Activated B cell treated with CpG ODN at 0.5 μM for 24 hours (primary cell): ENCODE measurements at regions of chr6 and their contacts with region 1.

Region 1: DNA sequence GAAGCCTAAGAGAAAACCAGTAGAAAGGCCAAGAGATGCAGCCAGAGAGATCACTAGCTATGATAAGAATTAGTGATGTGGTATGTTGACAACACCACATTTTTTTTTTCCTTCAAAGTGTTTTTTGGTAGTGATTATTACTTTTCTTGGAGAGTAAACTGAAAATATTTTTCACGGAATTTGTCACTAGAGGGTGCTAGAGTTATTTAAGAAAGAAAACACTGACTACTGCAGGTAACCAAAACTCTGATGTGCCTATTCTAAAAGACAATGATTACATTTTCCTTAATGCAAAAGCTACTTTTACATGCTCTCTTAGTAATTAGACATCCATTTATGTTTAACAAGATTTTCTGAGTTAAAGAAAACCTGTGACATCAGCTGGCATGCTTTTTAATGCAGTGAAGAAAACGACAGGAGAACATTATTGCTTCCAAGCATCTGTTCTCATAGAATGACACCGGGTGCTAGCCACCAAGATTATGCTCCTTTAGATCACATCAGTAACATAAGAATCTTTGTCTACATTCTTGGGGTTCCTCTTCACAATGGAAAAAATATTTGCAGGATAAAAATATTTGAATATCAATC is 28.8 kb downstream of the RWDD2A start:
- DNase-seq: no peak
- ATAC-seq: no peak
- H3K4me3 Mint-ChIP-seq: no peak overlapping the region
- H3K27ac Mint-ChIP-seq: no peak overlapping the region
- H3K4me1 Mint-ChIP-seq: no peaks in the 10 kb centered on the region
- H3K27me3 Mint-ChIP-seq: peaks cover 2% of the 10 kb centered on the region
- CTCF ChIP-seq: no peak

Region 2: GRCh38 chr6:83042467-83043053 is 179.4 kb before region 1 on chr6:
- CTCF ChIA-PET with region 1: no interaction called
- POLR2A ChIA-PET with region 1: no interaction called
- intact Hi-C with region 1: no loop called
- DNase-seq: no peak
- ATAC-seq: no peak
- H3K4me3 Mint-ChIP-seq: no peak overlapping the region
- H3K27ac Mint-ChIP-seq: no peak overlapping the region
- H3K4me1 Mint-ChIP-seq: no peaks in the 10 kb centered on the region
- H3K27me3 Mint-ChIP-seq: no peaks in the 10 kb centered on the region
- CTCF ChIP-seq: no peak

Region 3: DNA sequence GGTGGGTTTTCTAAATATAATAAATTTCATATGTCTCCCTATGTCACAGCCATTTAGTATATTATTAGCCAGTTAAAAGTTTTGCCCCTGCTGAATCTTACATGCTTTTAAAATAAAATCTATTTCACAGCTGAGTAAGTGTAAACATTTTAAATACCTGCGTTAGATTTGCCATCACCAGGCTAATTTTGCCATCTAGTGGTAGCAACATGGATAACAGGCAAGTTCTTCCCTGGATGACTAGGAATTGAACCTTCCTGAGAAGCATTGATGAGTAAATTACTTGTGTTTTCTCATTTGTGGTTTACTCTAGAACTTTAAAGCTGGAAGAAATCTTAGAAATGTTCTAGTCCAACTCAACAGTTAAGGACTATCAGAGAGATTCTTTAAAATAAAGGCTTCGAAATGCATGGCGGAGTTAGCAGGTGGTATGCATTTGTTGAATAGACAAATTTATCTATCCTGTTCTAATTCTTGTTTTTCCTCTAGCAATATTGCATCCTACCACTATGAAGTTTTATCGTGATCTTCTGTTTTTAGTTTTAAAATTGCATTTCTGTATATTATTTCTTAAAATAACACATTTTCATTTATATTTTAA is 293.0 kb after region 1 on chr6:
- CTCF ChIA-PET with region 1: interaction called, 26 read pairs
- POLR2A ChIA-PET with region 1: no interaction called
- intact Hi-C with region 1: loop called (anchors 1 kb)
- DNase-seq: no peak
- ATAC-seq: no peak
- H3K4me3 Mint-ChIP-seq: no peak overlapping the region
- H3K27ac Mint-ChIP-seq: no peak overlapping the region
- H3K4me1 Mint-ChIP-seq: peaks cover 9% of the 10 kb centered on the region
- H3K27me3 Mint-ChIP-seq: peaks cover 21% of the 10 kb centered on the region
- CTCF ChIP-seq: peak; percentile 68

Region 4: DNA sequence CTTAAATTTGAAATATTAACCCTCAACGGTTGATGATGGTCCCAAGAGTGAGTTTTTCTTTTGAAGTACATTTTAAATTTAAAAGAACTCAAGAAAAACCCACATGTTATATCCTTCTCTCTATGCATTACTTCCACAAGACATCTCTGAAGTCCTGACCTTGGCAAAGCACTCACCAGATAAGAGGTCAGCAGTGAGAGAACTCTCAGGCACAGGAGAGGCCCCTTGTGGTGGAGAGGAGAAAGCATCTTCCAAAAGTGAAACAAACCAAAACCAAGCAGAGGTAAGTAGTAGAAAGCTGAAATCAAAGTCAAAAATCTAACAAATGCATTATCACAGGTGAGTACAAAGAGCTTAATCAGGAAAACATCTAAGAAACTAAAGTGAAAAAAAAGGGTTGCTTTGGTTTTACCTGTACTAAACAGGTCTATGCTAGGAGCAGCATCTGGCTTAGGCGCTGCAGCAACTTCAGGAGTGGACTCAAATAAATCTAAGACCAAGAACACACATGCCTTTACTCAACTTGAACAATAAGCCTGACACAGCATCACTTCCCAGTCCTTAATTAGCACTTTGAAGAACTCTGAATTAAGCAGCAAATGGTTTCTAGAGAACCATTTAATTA is 370.9 kb after region 1 on chr6:
- CTCF ChIA-PET with region 1: no interaction called
- POLR2A ChIA-PET with region 1: no interaction called
- intact Hi-C with region 1: loop called (anchors 5 kb)
- DNase-seq: no peak
- ATAC-seq: no peak
- H3K4me3 Mint-ChIP-seq: no peak overlapping the region
- H3K27ac Mint-ChIP-seq: no peak overlapping the region
- H3K4me1 Mint-ChIP-seq: no peaks in the 10 kb centered on the region
- H3K27me3 Mint-ChIP-seq: no peaks in the 10 kb centered on the region
- CTCF ChIP-seq: no peak

Region 5: DNA sequence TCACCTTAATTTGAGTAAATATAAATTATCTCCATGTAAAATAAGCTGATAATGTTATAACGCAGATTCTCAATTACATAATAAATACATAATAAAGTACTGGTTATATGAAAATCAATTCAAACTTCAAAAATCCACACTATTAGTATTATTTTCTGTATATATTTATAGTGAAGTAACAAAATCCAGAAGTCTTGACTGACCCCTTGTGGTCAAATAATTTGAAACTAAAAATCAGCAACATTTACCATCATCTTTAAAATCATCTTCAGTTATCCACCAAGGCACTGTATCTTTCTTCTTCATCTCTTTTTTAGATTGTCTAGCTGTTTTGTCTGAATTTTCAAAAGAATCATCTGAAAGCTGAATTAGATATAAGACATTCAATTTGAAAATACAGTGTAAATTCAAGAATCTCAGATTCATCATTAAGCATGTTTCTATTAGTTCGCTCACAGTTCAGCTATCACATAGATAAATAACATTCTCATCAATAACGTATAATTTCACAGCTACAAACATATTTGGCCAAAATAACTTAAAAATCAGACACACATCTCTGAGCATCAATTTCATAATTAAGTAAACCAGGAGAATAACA is 998.9 kb after region 1 on chr6:
- CTCF ChIA-PET with region 1: no interaction called
- POLR2A ChIA-PET with region 1: no interaction called
- intact Hi-C with region 1: loop called (anchors 2 kb)
- DNase-seq: no peak
- ATAC-seq: no peak
- H3K4me3 Mint-ChIP-seq: no peak overlapping the region
- H3K27ac Mint-ChIP-seq: no peak overlapping the region
- H3K4me1 Mint-ChIP-seq: peaks cover 5% of the 10 kb centered on the region
- H3K27me3 Mint-ChIP-seq: no peaks in the 10 kb centered on the region
- CTCF ChIP-seq: peak; percentile 35